Right lobe of liver (tissue), 6 donors: ENCODE measurements at regions of chr13 and their contacts with region 1.

Region 1: DNA sequence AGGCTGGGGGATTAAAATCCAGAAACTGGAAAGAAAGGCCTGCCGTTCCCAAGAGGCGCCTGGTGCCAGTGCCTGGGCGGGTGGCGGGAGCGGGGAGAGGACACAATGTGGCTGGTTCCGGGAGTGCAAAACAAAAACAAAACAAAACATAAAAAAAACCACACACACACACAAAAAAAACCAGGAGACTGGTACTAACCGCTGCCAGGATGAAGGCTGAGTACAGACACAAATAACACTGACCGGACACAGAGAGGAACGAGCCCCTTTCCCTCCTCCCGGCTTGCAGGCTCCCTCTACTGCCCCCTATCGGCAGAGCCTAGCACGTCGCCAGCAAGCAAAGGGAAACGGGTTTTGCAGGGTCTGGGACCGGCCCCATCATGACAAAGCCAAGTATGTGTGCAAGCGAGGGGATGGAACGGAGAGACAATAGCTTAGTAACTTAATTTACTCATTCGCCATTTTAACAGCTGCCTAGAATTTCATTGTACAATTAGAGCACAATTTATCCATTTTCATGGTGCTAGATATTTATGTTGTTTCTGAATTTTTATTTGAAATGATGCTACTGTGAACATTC is 17.9 kb upstream of the ZDHHC20 start:
- DNase-seq: peak; percentile 83 to 85 (median 83)
- ATAC-seq: peak; percentile 95 to 96 (median 96)
- H3K4me3 ChIP-seq: peak overlapping the region; percentile 13 to 54 (median 49)
- H3K27ac ChIP-seq: peak overlapping the region in 1 of 3 donors; percentile 17
- H3K4me1 ChIP-seq: peaks cover 0 to 9% (median 3%) of the 10 kb centered on the region in 4 donors
- H3K27me3 ChIP-seq: no peaks in the 10 kb centered on the region
- CTCF ChIP-seq: peak; percentile 93 to 98 (median 95)
- POLR2A ChIP-seq: no peak

Region 2: GRCh38 chr13:21115231-21115630 is 361.8 kb before region 1 on chr13:
- intact Hi-C with region 1: loop called (anchors 10 kb)
- DNase-seq: no peak
- ATAC-seq: no peak
- H3K4me3 ChIP-seq: no peak overlapping the region
- H3K27ac ChIP-seq: no peak overlapping the region
- H3K4me1 ChIP-seq: no peaks in the 10 kb centered on the region
- H3K27me3 ChIP-seq: no peaks in the 10 kb centered on the region
- CTCF ChIP-seq: no peak
- POLR2A ChIP-seq: no peak